HepG2 (cell line): ENCODE measurements at regions of chr5 and their contacts with region 1.

Region 1: GRCh38 chr5:168987543-168988300 is 313.2 kb downstream of the SLIT3 start:
- DNase-seq: peak; percentile 43
- ATAC-seq: peak; percentile 81
- H3K4me3 ChIP-seq: no peak overlapping the region
- H3K27ac ChIP-seq: no peak overlapping the region
- H3K4me1 ChIP-seq: peaks cover 8% of the 10 kb centered on the region; the same call in 1 of the 2 replicates
- H3K27me3 ChIP-seq: peaks cover 2 to 41% of the 10 kb centered on the region in 2 experiments; a peak in 3 of 5 replicates
- CTCF ChIP-seq: peak; percentile 84
- EP300 ChIP-seq: no peak
- POLR2A ChIP-seq: no peak
- RAD21 ChIP-seq: peak; percentile 47; the same call in 1 of the 2 replicates

Region 2: GRCh38 chr5:168679515-168679920 is 308.2 kb before region 1 on chr5:
- CTCF ChIA-PET with region 1: no interaction called
- POLR2A ChIA-PET with region 1: no interaction called
- in situ Hi-C with region 1: no loop called
- intact Hi-C with region 1: loop called (anchors 2 kb)
- DNase-seq: peak; percentile 56
- ATAC-seq: peak; percentile 69
- H3K4me3 ChIP-seq: no peak overlapping the region
- H3K27ac ChIP-seq: no peak overlapping the region
- H3K4me1 ChIP-seq: peaks cover 23% of the 10 kb centered on the region
- H3K27me3 ChIP-seq: peaks cover 0 to 9% of the 10 kb centered on the region in 2 experiments; a peak in 2 of 5 replicates
- CTCF ChIP-seq: peak; percentile 86
- EP300 ChIP-seq: no peak
- POLR2A ChIP-seq: no peak
- RAD21 ChIP-seq: peak; percentile 73

Region 3: GRCh38 chr5:169149317-169149716 is 161.6 kb after region 1 on chr5:
- CTCF ChIA-PET with region 1: no interaction called
- POLR2A ChIA-PET with region 1: no interaction called
- in situ Hi-C with region 1: no loop called
- intact Hi-C with region 1: loop called (anchors 1 kb)
- DNase-seq: peak; percentile 16
- ATAC-seq: peak; percentile 63; the same call in 2 of the 3 replicates
- H3K4me3 ChIP-seq: no peak overlapping the region
- H3K27ac ChIP-seq: no peak overlapping the region
- H3K4me1 ChIP-seq: no peaks in the 10 kb centered on the region
- H3K27me3 ChIP-seq: peaks cover 1 to 9% of the 10 kb centered on the region in 2 experiments; a peak in 2 of 5 replicates
- CTCF ChIP-seq: peak; percentile 35
- EP300 ChIP-seq: no peak
- POLR2A ChIP-seq: no peak
- RAD21 ChIP-seq: no peak

Region 4: GRCh38 chr5:169302491-169303118 is 314.9 kb after region 1 on chr5:
- CTCF ChIA-PET with region 1: interaction called, 15 read pairs
- POLR2A ChIA-PET with region 1: no interaction called
- in situ Hi-C with region 1: loop called (anchors 5 kb)
- intact Hi-C with region 1: no loop called
- DNase-seq: peak; percentile 44
- ATAC-seq: peak; percentile 84
- H3K4me3 ChIP-seq: no peak overlapping the region
- H3K27ac ChIP-seq: no peak overlapping the region
- H3K4me1 ChIP-seq: no peaks in the 10 kb centered on the region
- H3K27me3 ChIP-seq: peaks cover 2 to 28% of the 10 kb centered on the region in 2 experiments; a peak in 3 of 5 replicates
- CTCF ChIP-seq: peak; percentile 78
- EP300 ChIP-seq: no peak
- POLR2A ChIP-seq: no peak
- RAD21 ChIP-seq: no peak

Region 5: DNA sequence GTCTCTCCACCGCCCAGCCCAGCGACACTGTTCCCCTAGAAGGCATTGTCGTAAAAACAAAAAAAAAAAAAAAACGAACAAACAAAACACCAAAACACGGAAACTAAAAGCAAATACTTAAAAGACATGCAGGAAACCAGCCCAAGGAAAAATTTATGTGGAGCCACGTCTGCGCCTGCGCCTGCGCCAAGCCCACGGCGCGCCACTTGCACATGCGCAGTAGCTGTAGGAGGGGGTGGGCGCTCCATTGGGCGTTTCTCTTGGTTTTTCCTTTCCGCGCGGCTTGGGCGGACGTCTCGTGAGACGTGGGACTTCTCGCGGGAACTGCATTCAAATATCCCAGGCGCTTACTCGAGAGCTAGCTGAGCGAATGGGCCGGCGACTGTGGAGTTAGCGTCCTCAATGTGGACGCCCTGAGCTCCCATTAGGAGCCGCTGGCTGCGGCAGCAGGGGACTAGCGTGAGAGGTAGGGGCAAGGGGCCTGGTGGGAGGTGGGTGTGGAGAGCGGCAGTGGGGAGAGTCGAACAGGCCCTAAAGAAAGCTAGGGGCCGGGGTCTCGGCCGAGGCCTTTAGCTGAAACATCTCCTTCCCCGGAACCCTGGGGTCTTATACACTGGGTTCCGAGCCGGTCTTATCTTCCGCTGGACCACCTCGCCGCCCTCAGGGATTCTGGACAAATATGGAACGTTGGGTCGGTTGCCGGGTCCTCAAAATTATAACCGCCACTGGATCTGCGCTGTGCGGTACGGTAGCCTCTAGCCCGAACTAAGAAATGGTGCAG is 595.9 kb after region 1 on chr5 and contains the start of gene SPDL1:
- CTCF ChIA-PET with region 1: interaction called, 10 read pairs
- POLR2A ChIA-PET with region 1: no interaction called
- in situ Hi-C with region 1: loop called (anchors 25 kb)
- intact Hi-C with region 1: no loop called
- DNase-seq: peak; percentile 93
- ATAC-seq: peak; percentile 99
- H3K4me3 ChIP-seq: peak within 1 kb of the TSS; percentile 84 to 93 (median 90)
- H3K27ac ChIP-seq: peak within 1 kb of the TSS; percentile 78
- H3K4me1 ChIP-seq: peaks cover 12% of the 10 kb centered on the region
- H3K27me3 ChIP-seq: no peaks in the 10 kb centered on the region; a peak in 1 of 5 replicates
- CTCF ChIP-seq: no peak
- EP300 ChIP-seq: no peak
- POLR2A ChIP-seq: peak; percentile 76 to 82
- RAD21 ChIP-seq: 0 out of 2 replicates have a peak, but pooled peaks have one; percentile 9
- total RNA-seq, gene SPDL1: 36.6 and 61.4 TPM in 2 replicates

Region 6: GRCh38 chr5:169980418-169981053 is 992.8 kb after region 1 on chr5 and contains the start of gene INSYN2B:
- CTCF ChIA-PET with region 1: no interaction called
- POLR2A ChIA-PET with region 1: no interaction called
- in situ Hi-C with region 1: no loop called
- intact Hi-C with region 1: loop called (anchors 5 kb)
- DNase-seq: peak; percentile 39
- ATAC-seq: peak; percentile 97
- H3K4me3 ChIP-seq: no peak within 1 kb of the TSS
- H3K27ac ChIP-seq: no peak within 1 kb of the TSS
- H3K4me1 ChIP-seq: no peaks in the 10 kb centered on the region
- H3K27me3 ChIP-seq: no peaks in the 10 kb centered on the region; a peak in 1 of 5 replicates
- CTCF ChIP-seq: peak; percentile 42
- EP300 ChIP-seq: no peak
- POLR2A ChIP-seq: no peak
- RAD21 ChIP-seq: no peak
- total RNA-seq, gene INSYN2B: not detected in 2 replicates